ENCODE measurements at regions of chr2 and their contacts with region 1.

Region 1: DNA sequence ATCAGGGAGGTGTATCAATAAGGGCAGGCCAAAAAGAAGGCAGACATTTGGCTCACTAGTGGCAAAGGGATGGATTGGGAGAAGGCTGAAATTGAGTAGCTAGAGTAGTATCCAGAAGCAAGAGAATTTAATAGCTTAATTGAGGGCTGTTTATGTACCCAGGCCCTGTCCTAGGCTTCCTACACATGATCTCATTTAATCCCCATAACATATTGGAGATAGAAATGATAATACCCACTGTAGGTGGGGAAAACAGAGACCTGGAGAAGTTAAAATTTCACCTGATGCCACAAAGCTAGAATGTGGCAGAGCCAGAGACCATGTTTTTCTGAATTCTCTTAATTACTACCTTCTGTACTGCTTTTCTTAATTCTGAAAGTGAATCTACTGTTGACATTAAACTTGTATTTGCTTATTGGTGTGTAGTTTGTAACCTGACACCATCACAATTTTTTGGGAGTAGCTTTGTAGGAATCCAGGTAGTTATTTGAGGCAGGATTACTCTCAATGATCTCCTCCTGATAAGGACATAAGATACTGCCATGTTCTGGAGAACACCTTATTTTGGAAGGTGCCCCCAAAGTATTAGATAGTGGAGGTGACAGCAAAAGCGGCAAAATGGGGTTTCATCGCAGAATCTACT is 42.2 kb downstream of the RAB10 start:
- DNase-seq: no peak
- H3K4me3 ChIP-seq: no peak overlapping the region
- H3K27ac ChIP-seq: no peak overlapping the region
- H3K4me1 ChIP-seq: peaks cover 6 to 57% of the 10 kb centered on the region in 2 donors
- H3K27me3 ChIP-seq: no peaks in the 10 kb centered on the region
- CTCF ChIP-seq: no peak
- POLR2A ChIP-seq: no peak

Region 2: GRCh38 chr2:26035090-26035743 is 40.9 kb before region 1 on chr2:
- intact Hi-C with region 1: loop called in 1 of 2 experiments (anchors 5 kb)
- DNase-seq: no peak
- H3K4me3 ChIP-seq: peak overlapping the region; percentile 51 to 79 (median 72)
- H3K27ac ChIP-seq: peak overlapping the region; percentile 80 to 97 (median 96)
- H3K4me1 ChIP-seq: peaks cover 18 to 46% of the 10 kb centered on the region in 2 donors
- H3K27me3 ChIP-seq: no peaks in the 10 kb centered on the region
- CTCF ChIP-seq: no peak
- POLR2A ChIP-seq: no peak

Region 3: GRCh38 chr2:26561918-26562810 is 486.1 kb after region 1 on chr2:
- intact Hi-C with region 1: no loop called
- DNase-seq: peak in 6 of 7 donors; percentile 33 to 57 (median 44)
- H3K4me3 ChIP-seq: peak overlapping the region in 1 of 4 donors; percentile 51
- H3K27ac ChIP-seq: no peak overlapping the region
- H3K4me1 ChIP-seq: peaks cover 0 to 8% of the 10 kb centered on the region in 2 donors
- H3K27me3 ChIP-seq: peaks cover 33% of the 10 kb centered on the region
- CTCF ChIP-seq: peak in 3 of 6 experiments; percentile 11 to 33 (median 27)
- POLR2A ChIP-seq: no peak

Measured in adrenal gland (tissue), 19 donors.